ENCODE measurements at regions of chr18 and their contacts with region 1.

Region 1: GRCh38 chr18:35267161-35267651 is 22.8 kb downstream of the ZSCAN30 start:
- DNase-seq: peak; percentile 83

Region 2: GRCh38 chr18:35290073-35290735 is 23.0 kb after region 1 on chr18 and contains the start of gene ZSCAN30:
- intact Hi-C with region 1: loop called (anchors 1 kb)
- DNase-seq: peak; percentile 98
- total RNA-seq, gene ZSCAN30: 18.6 TPM

Region 3: GRCh38 chr18:35343936-35344735 is 76.9 kb after region 1 on chr18 and contains the start of gene ZNF24:
- intact Hi-C with region 1: loop called (anchors 2 kb)
- DNase-seq: peak; percentile 97
- total RNA-seq, gene ZNF24: 44.2 TPM

Region 4: GRCh38 chr18:35547008-35547605 is 279.9 kb after region 1 on chr18:
- intact Hi-C with region 1: no loop called
- DNase-seq: no peak

Measured in cardiac septum (tissue), 1 donor.